Cardiac septum (tissue), 1 donor: ENCODE measurements at regions of chr3 and their contacts with region 1.

Region 1: DNA sequence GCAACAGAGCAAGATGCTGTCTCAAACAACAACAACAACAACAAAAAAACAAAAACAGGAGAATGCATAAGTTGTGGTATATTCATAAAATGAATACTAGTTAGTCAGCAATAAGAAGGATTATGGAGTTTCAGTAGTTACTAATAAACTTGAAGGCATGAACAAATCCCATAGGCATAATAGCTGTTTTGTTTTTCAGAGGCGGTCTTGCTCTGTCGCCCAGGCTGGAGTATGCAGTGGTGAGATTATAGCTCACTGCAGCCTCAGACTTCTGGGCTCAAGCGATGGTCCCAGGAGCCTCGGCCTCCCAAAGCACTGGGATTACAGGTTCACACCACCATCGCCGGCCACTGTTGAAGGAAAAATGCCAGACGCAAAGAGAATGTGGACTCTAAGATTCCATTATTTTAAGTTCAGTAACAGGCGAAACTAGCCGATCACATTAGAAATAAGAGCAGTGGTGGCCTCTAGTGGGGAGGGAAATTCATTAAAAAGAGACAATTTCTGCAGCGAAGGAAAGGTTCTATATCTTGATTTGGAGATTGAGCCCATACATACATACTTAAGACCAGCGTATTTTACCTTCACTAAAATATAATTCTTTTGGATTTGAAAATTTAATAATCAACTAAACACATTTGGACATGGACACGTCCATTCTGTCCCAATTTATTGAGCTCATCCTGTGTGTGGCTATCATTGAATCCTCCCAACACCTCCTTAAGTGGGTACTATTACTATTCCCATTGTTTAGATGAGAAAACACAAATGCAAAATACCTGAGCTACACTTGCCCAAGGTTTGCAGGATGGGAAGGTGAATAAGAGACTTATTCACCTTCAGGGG is 27.4 kb upstream of the HDAC11 start:
- DNase-seq: no peak

Region 2: DNA sequence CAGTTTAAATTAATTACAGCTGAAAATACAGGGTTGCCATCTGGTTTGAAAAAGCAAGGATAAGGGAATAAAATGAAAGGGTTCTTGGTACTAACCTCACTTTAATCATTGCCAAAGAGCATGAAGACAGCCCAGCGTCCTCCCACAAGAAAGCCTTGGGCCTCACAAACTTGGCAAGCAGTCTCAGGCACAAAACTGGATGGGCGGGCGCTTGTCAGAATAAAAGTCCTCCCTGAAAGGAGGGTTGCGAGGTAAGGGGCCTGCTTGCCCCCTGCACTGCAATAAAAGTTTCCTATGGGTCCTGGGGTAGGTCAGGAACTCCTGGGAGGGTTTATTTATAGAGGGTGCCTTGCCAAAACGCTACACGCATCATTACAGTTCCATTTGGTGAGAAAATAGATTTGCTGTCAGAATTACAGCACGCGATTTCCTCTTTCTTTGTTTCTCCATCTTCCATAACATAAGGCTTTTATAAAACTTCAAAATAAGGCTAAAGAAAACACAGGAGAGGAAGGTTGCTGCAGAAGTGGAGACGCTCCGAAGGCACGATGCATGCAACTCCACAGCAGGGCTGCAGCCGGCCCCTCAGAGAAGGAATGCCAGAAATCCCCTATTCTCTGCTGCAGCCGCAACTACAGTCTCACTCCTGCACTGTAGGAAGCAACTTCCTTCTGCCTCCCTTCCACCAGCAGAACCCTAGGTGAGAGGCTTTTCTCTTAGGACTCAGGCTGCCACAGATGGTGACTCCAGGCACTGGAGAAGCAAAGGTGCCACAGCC is 1870.3 kb before region 1 on chr3:
- intact Hi-C with region 1: no loop called
- DNase-seq: peak; percentile 88

Region 3: DNA sequence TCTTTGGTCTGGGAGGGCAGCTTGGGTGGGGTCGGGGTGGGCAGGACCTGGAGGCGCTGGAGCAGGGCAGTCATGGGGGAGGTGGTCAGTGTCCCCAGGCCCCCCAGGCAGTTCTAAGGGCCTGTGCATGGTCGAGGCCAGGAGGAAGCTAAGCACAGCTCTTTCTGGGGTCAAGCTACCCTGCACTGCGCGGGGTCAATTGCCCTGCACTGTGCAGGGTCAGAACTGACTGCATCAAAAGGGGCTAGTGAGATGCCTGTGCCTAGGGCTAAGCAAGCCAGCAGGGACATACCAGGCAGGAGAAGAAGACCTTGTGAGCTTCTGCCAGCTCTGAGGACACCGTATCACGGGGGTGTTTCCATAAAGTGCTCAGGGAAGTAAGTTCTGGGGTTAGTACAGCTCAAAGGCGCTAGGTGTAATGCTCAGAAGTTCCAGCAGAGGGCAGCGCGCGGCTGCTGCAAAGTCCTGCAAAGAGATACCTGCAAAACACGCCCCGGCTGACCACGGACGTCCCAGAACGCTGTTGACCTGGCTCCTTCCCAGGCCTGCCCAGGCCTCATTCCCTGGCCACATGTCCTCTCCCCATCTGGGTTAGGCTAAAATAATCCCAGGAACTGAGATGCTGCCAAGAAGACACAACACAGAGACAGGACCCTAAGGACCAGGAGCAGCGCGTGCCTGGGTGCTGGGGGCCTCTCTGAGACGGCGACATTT is 360.7 kb before region 1 on chr3:
- intact Hi-C with region 1: loop called (anchors 2 kb)
- DNase-seq: peak; percentile 93

Region 4: DNA sequence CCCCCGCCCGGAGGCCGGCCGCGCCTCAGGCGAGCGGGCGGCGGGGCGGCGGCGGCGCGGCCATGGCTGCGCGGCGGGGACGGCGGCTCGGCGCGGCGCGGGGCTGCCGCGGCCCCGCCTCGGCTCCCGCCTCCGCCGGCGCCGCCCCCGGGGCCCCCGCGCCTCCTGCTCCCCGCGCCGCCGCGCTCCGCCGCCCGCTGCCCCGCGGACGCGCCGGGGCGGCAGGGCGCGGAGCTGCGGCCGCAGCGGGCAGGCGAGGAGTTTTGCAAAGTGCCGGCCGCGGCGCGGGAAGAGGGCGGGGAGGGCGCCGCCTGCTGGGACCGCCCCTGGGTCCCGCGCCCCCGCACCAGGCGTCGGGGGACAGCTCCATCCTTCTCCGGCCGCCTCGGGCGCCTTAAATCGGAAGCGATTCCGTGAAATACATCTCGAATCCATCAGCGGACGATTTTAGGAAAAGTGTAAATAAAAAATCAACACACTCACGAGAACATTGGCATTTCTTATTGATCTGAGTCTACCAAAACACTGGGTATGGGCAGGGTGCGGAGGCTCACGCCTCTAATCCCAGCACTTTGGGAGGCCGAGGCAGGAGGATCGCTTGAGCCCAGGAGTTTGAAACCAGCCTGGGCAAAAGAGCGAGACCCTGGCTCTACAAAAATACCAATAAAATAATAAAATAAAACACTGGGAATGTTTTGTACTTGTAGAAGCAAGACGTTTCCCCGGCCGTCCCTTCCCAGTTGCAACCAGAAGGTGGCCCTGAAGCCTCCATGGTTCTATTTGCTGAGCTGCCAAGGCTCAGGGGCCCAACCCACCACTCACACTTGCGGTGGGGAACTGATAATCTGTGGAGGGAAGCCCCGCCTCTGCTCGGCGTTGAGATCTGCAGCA is 169.5 kb before region 1 on chr3:
- intact Hi-C with region 1: loop called (anchors 10 kb)
- DNase-seq: no peak

Region 5: DNA sequence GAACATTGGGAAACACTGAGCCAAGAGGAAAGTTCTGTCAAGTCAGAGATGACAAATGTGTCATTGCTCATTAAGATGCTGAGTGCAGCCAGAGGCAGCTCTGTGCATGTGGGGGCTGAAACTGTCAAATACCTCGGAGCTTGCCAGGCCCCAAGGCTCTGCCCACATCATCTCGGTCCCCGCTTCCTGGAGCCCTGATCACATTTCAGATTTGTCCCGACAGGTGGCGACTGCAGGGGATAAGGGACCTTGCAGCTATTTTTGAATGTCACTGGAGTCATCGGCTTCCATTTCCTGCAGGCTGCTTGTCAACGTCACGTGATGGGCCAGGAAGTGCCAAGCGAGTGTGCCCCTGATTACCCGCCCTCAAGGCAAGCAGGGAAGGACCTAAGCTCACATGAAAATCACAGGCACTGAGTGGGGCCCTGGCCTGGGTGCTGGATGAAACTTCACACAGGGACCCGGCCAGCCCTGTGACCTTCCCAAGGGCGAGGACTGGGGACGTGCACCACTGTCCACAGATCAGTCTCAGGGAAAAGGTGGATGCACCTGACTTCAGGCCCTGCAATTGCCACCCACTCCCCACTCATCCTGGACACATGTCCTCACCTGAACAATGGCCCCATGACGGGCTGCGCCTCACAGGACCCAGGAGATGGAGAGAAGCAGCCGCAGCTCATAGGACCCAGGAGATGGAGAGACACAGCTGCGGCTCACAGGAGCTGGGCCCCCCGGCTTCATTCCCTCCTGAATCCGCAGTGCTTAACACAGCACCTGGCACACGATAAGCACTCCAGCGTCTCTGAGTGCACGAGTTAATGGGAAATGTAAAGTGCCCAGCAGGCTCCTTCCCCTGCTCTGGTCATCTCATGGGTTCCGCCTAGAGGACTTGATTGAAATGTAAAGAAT is 106.0 kb before region 1 on chr3:
- intact Hi-C with region 1: loop called (anchors 5 kb)
- DNase-seq: no peak